ENCODE measurements at regions of chr16 and their contacts with region 1.

Region 1: DNA sequence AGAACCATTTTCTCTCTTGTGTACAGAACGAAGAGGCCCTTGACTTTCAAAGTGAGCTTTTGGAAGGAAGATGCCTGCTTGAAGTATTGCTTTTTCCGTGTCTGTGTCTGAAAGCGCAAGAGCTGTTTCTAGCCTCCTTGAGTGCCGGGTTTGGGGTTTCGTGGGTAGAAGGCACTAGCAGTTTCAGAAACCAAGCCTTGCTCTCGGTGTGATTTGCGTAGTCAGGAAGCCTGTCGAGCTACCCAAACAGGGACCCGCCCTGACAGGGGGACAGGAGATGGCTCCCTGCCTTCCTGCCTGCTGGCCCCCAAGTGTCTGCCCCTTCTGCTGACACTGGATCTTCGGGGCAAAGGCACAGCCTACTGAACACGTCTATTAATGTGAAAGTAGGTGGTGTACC is 322.0 kb downstream of the MAF start:
- DNase-seq: peak; percentile 34 to 84
- ATAC-seq: peak; percentile 79 to 96 (median 91)
- H3K4me3 ChIP-seq: peak overlapping the region; percentile 5
- H3K4me3 Mint-ChIP-seq: peak overlapping the region; percentile 86
- H3K27ac ChIP-seq: peak overlapping the region; percentile 68
- H3K27ac Mint-ChIP-seq: peak overlapping the region; percentile 89 to 90
- H3K4me1 ChIP-seq: peaks cover 24% of the 10 kb centered on the region
- H3K4me1 Mint-ChIP-seq: peaks cover 47 to 51% of the 10 kb centered on the region in 2 donors
- H3K27me3 ChIP-seq: no peaks in the 10 kb centered on the region
- H3K27me3 Mint-ChIP-seq: no peaks in the 10 kb centered on the region
- CTCF ChIP-seq: no peak

Region 2: GRCh38 chr16:79047229-79047983 is 231.1 kb before region 1 on chr16:
- intact Hi-C with region 1: no loop called
- DNase-seq: peak in 1 of 2 donors; percentile 54
- ATAC-seq: peak; percentile 52 to 70 (median 53)
- H3K4me3 ChIP-seq: no peak overlapping the region
- H3K4me3 Mint-ChIP-seq: no peak overlapping the region
- H3K27ac ChIP-seq: no peak overlapping the region
- H3K27ac Mint-ChIP-seq: no peak overlapping the region
- H3K4me1 ChIP-seq: peaks cover 13% of the 10 kb centered on the region
- H3K4me1 Mint-ChIP-seq: peaks cover 22 to 31% of the 10 kb centered on the region in 2 donors
- H3K27me3 ChIP-seq: no peaks in the 10 kb centered on the region
- H3K27me3 Mint-ChIP-seq: no peaks in the 10 kb centered on the region
- CTCF ChIP-seq: peak; percentile 66

Region 3: DNA sequence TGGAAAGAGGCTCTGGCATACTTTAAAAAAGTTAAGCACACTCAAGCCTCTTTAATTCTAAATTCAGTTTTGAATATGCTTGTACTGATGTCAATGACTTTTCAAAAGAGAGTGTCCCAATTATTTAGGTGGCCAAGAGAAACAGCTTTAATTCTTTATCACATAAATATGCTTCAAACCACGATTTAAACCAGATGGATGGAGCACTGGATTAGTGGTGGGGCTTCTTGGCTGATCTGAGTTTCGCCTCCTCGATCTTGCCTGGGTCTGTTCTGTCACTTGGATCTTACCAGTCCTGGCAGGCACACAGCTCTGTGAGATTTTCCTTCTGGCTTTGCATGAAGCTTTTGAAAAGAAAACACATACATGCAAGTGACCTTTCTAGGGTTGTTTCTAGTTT is 145.8 kb before region 1 on chr16:
- intact Hi-C with region 1: no loop called
- DNase-seq: no peak
- ATAC-seq: no peak
- H3K4me3 ChIP-seq: no peak overlapping the region
- H3K4me3 Mint-ChIP-seq: no peak overlapping the region
- H3K27ac ChIP-seq: no peak overlapping the region
- H3K27ac Mint-ChIP-seq: no peak overlapping the region
- H3K4me1 ChIP-seq: no peaks in the 10 kb centered on the region
- H3K4me1 Mint-ChIP-seq: peaks cover 8% of the 10 kb centered on the region in 2 donors
- H3K27me3 ChIP-seq: no peaks in the 10 kb centered on the region
- H3K27me3 Mint-ChIP-seq: no peaks in the 10 kb centered on the region
- CTCF ChIP-seq: no peak

Region 4: GRCh38 chr16:79191917-79192364 is 86.6 kb before region 1 on chr16:
- intact Hi-C with region 1: no loop called
- DNase-seq: no peak
- ATAC-seq: no peak
- H3K4me3 ChIP-seq: no peak overlapping the region
- H3K4me3 Mint-ChIP-seq: no peak overlapping the region
- H3K27ac ChIP-seq: no peak overlapping the region
- H3K27ac Mint-ChIP-seq: no peak overlapping the region
- H3K4me1 ChIP-seq: peaks cover 40% of the 10 kb centered on the region
- H3K4me1 Mint-ChIP-seq: peaks cover 52 to 56% of the 10 kb centered on the region in 2 donors
- H3K27me3 ChIP-seq: no peaks in the 10 kb centered on the region
- H3K27me3 Mint-ChIP-seq: no peaks in the 10 kb centered on the region
- CTCF ChIP-seq: no peak

Region 5: GRCh38 chr16:79381552-79382042 is 103.1 kb after region 1 on chr16:
- intact Hi-C with region 1: loop called (anchors 5 kb)
- DNase-seq: peak; percentile 24 to 58
- ATAC-seq: peak; percentile 60 to 69 (median 68)
- H3K4me3 ChIP-seq: peak overlapping the region; percentile 2
- H3K4me3 Mint-ChIP-seq: peak overlapping the region; percentile 86
- H3K27ac ChIP-seq: peak overlapping the region; percentile 70
- H3K27ac Mint-ChIP-seq: peak overlapping the region; percentile 88 to 91
- H3K4me1 ChIP-seq: peaks cover 13% of the 10 kb centered on the region
- H3K4me1 Mint-ChIP-seq: peaks cover 37 to 40% of the 10 kb centered on the region in 2 donors
- H3K27me3 ChIP-seq: no peaks in the 10 kb centered on the region
- H3K27me3 Mint-ChIP-seq: no peaks in the 10 kb centered on the region
- CTCF ChIP-seq: no peak

Region 6: DNA sequence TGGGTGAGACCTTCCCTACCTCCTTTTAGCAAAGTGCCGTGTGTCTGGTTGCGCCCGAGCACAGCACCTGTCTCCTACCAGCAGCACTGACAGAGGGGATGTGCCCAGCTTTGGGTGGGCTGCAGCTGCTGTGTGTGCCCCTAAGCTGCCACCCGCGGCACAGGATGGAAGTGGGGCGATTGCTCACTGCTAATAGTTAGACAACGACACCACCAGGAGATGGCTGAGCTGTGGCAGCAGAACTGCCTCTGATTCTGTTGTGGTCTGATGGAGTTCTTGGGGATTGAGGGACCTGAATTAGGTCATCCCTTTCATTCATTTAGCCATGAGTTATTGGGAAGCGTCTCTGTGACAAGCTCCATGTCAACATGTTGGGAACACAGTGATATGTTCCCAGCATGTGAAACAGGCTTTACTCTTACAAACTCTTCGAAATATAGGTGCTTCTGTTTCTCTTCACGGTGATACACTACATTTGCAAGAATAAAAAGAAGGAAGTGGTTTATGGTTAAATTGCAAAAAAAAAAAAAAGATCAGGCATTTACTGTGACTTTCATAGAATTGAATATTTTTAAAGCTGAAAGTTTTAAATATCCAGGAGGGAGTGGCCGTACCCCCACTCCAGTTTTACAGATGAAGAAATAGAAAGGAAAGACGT is 137.6 kb after region 1 on chr16:
- intact Hi-C with region 1: loop called (anchors 10 kb)
- DNase-seq: peak; percentile 20 to 44
- ATAC-seq: peak; percentile 64 to 81 (median 75)
- H3K4me3 ChIP-seq: no peak overlapping the region
- H3K4me3 Mint-ChIP-seq: peak overlapping the region; percentile 94
- H3K27ac ChIP-seq: peak overlapping the region; percentile 30
- H3K27ac Mint-ChIP-seq: peak overlapping the region; percentile 86 to 90
- H3K4me1 ChIP-seq: peaks cover 28% of the 10 kb centered on the region
- H3K4me1 Mint-ChIP-seq: peaks cover 48 to 63% of the 10 kb centered on the region in 2 donors
- H3K27me3 ChIP-seq: no peaks in the 10 kb centered on the region
- H3K27me3 Mint-ChIP-seq: peaks cover 0 to under 1% of the 10 kb centered on the region in 2 donors
- CTCF ChIP-seq: no peak